ENCODE measurements at regions of chr12 and their contacts with region 1.

Region 1: DNA sequence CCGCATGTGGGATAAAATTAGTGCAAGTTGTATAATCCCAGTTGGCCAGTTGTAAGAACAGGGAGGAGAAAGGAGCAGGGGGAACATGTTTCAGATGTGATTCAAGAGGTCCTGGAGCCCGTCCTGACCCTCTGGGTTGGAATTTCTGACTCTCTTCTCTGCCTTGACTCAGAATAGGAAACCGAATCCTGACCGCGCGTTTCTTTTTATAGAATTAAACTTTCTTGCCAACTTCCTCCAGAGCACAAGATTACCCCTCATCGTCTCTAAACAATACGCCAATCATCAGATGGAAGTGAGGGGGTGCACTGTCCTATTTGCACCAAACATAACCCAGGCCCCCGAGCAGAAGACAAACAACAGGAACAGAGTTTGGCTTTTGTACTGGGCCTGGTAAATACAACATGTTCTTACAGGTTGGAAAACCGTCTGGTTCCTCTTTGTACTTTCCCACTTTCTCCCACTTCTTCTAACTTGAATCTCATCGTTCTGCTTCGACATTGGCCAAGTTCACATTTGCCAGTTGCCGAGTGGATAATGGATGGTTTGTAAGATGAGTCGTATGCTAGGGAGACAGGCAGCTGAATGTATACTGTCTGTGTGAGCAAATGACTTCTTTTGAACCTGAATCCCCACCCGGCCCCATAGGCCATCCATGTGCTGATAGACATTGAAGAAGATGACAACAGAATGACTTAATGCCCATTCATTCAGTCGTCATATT is 42.6 kb upstream of the MED13L start:
- DNase-seq: peak; percentile 21 to 72
- ATAC-seq: peak; percentile 86 to 97 (median 94)
- H3K4me3 ChIP-seq: peak overlapping the region in 6 of 10 donors; percentile 1 to 18 (median 14)
- H3K27ac ChIP-seq: peak overlapping the region; percentile 13 to 80 (median 66)
- H3K4me1 ChIP-seq: peaks cover 10 to 45% (median 29%) of the 10 kb centered on the region in 9 donors
- H3K27me3 ChIP-seq: no peaks in the 10 kb centered on the region
- CTCF ChIP-seq: no peak

Region 2: GRCh38 chr12:116406516-116406915 is 86.5 kb after region 1 on chr12:
- intact Hi-C with region 1: loop called in 1 of 10 experiments (anchors 5 kb)
- DNase-seq: peak; percentile 84 to 88
- ATAC-seq: peak; percentile 90 to 97 (median 94)
- H3K4me3 ChIP-seq: no peak overlapping the region
- H3K27ac ChIP-seq: peak overlapping the region in 5 of 10 donors; percentile 1 to 46 (median 38)
- H3K4me1 ChIP-seq: peaks cover 0 to 36% (median 10%) of the 10 kb centered on the region in 9 donors
- H3K27me3 ChIP-seq: no peaks in the 10 kb centered on the region
- CTCF ChIP-seq: peak in 6 of 9 donors; percentile 9 to 29 (median 26)

Region 3: DNA sequence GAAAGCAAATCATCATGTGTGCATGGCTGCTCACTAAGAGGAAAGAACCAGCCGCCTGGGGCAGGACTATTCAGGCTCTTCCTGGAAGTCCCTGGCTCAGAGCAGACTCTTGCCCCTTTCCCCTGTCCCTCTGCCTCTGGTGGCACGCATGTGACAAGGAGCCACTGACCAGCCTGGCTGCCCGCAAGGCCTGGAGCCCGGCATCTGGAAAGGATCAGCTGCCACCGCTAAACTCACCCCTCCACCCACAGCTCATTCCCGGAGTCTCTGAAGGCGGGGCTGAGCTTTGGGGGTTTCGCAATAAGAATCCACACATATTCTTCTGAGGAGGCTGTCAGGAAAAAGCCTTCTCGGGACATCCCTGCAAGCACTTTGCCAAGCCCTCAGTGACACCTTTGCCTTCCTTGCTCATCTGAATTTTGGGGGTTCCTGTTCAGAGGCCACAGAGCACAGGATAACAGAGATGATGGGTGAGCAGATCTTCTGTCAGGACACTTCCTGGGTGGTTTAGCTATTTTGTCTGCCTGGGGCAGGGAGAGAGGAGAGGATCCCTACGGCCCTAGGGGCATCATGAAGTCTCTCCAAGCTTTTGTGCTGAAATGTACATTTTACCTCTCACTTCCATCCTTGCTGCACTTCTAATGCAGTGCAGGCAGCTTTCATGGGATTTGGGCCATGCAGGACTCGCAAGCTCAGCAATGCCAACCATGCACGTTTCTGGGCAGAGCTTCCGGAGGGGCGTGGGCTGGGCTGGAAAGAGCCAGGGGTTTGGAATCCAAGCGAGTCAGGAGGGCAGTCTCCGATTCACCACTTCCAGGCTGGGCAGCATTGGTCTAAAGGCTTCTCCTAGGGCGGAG is 114.3 kb after region 1 on chr12:
- intact Hi-C with region 1: loop called in 1 of 10 experiments (anchors 10 kb)
- DNase-seq: peak; percentile 75 to 77
- ATAC-seq: peak; percentile 82 to 96 (median 94)
- H3K4me3 ChIP-seq: peak overlapping the region in 7 of 10 donors; percentile 11 to 37 (median 23)
- H3K27ac ChIP-seq: peak overlapping the region in 7 of 10 donors; percentile 6 to 72 (median 41)
- H3K4me1 ChIP-seq: peaks cover 0 to 21% (median 14%) of the 10 kb centered on the region in 9 donors
- H3K27me3 ChIP-seq: no peaks in the 10 kb centered on the region
- CTCF ChIP-seq: no peak